MCF 10A (cell line): ENCODE measurements at regions of chr3 and their contacts with region 1.

Region 1: GRCh38 chr3:197718880-197719279 is 17.8 kb downstream of the RUBCN start:
- DNase-seq: peak; percentile 95
- H3K4me3 Mint-ChIP-seq: peak overlapping the region; percentile 14
- H3K27ac Mint-ChIP-seq: peak overlapping the region; percentile 94
- H3K4me1 Mint-ChIP-seq: peaks cover 19% of the 10 kb centered on the region
- H3K27me3 Mint-ChIP-seq: no peaks in the 10 kb centered on the region
- CTCF ChIP-seq: no peak

Region 2: GRCh38 chr3:197730200-197730599 is 11.3 kb after region 1 on chr3:
- CTCF ChIA-PET with region 1: interaction called, 3 read pairs
- POLR2A ChIA-PET with region 1: interaction called, 105 read pairs
- intact Hi-C with region 1: loop called (anchors 1 kb)
- DNase-seq: peak; percentile 60
- H3K4me3 Mint-ChIP-seq: no peak overlapping the region
- H3K27ac Mint-ChIP-seq: peak overlapping the region; percentile 91
- H3K4me1 Mint-ChIP-seq: peaks cover 25% of the 10 kb centered on the region
- H3K27me3 Mint-ChIP-seq: no peaks in the 10 kb centered on the region
- CTCF ChIP-seq: no peak